H1 (cell line): ENCODE measurements at regions of chr3 and their contacts with region 1.

Region 1: DNA sequence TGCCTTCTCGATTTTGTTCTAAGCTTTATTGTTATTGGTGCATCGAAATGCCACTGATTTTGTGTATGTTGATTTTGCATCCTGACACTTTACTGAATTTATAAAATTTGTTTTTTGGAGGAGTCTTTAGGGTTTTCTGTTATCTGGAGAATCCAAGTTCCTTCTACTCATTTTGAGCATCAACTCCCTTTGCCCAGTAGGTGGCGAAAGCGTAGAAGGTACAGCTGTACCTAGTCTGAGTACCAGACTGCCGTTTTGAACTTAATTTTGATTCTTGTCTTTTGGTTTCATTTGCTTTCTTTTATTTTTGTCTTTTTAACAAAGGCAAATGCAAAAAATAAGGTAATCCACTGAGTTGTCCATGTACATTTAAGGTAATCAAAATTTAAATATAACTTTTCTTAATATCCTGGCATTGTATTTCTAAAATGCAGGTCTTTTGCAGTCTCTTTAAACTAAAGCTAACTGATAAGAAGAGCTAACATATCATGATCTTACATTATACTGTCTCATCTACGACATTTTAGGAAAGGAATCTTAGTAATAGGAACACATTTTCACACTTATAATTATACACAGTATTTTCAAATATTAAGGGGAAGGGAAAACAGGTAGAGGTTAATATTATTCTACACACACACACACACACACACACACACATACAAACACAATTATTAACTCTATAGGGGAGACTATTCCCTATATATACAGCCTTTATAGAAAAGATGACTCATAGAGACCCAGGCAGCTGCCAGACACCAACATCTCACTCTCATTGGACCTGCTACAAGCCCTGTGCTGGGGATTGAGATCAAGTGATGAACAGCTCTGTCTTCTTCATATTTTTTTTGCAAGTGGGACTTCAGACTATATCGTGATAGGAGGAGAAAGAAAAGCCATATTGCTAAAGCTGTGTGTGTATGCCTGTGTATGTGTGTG is 71.7 kb downstream of the SYNPR start:
- DNase-seq: no peak
- H3K4me3 ChIP-seq: no peak overlapping the region
- H3K27ac ChIP-seq: no peak overlapping the region
- H3K4me1 ChIP-seq: peaks cover 0 to 4% (median 3%) of the 10 kb centered on the region in 4 experiments; a peak in 3 of 7 replicates
- H3K27me3 ChIP-seq: no peaks in the 10 kb centered on the region
- CTCF ChIP-seq: peak in 2 of 3 experiments; percentile 70 to 71; a peak in 3 of 4 replicates
- EP300 ChIP-seq: no peak
- POLR2A ChIP-seq: no peak
- RAD21 ChIP-seq: peak; percentile 83 to 86

Region 2: GRCh38 chr3:63364910-63365431 is 15.1 kb after region 1 on chr3:
- CTCF ChIA-PET with region 1: interaction called, 96 read pairs
- POLR2A ChIA-PET with region 1: no interaction called
- DNase-seq: no peak
- H3K4me3 ChIP-seq: no peak overlapping the region
- H3K27ac ChIP-seq: no peak overlapping the region
- H3K4me1 ChIP-seq: no peaks in the 10 kb centered on the region
- H3K27me3 ChIP-seq: no peaks in the 10 kb centered on the region
- CTCF ChIP-seq: peak; percentile 31 to 84 (median 70)
- EP300 ChIP-seq: no peak
- POLR2A ChIP-seq: no peak
- RAD21 ChIP-seq: peak; percentile 72 to 81

Region 3: DNA sequence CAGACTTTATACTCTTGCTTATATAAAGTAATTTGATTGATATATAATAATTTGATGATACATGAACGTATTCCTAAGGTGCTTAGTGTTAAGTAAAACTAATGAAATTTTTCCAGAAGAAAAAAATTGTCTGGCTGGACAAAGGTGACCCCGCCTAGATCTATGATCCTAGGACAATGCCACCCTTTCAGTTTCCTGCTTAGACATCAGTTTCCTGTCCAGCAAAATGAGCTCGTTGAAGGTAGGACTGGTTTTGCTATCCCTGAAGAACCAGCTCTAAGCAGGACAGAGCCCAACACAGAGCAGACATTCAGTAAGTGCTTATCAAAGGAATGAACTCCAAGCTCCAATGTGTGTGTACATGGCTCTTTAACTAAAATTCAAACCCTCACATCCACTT is 221.8 kb after region 1 on chr3:
- CTCF ChIA-PET with region 1: interaction called, 34 read pairs
- POLR2A ChIA-PET with region 1: no interaction called
- DNase-seq: no peak
- H3K4me3 ChIP-seq: no peak overlapping the region
- H3K27ac ChIP-seq: no peak overlapping the region
- H3K4me1 ChIP-seq: peaks cover 0 to 8% (median 3%) of the 10 kb centered on the region in 4 experiments; a peak in 3 of 7 replicates
- H3K27me3 ChIP-seq: no peaks in the 10 kb centered on the region; a peak in 1 of 7 replicates
- CTCF ChIP-seq: no peak
- EP300 ChIP-seq: no peak
- POLR2A ChIP-seq: no peak
- RAD21 ChIP-seq: no peak

Region 4: DNA sequence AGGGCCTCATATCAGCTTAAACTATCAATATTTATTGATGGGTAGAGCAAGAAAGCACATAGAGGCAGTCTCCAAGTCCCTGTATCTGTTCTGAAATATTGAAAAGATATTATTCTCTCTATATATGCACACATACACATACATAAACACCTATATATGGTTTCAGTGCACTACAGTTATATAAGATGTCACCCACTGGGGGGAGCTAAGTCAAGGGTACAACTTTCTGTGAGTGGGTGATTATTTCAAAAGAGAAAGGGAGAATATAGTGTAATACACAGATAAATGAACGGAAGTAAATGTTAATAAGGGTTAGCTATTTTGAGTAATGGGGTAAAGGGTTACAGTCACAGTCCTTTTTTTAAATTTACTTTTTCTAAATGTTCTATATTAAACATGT is 311.4 kb after region 1 on chr3:
- CTCF ChIA-PET with region 1: interaction called, 77 read pairs
- POLR2A ChIA-PET with region 1: interaction called, 6 read pairs
- DNase-seq: no peak
- H3K4me3 ChIP-seq: no peak overlapping the region
- H3K27ac ChIP-seq: no peak overlapping the region
- H3K4me1 ChIP-seq: peaks cover 0 to 3% (median 0%) of the 10 kb centered on the region in 4 experiments; a peak in 1 of 7 replicates
- H3K27me3 ChIP-seq: no peaks in the 10 kb centered on the region
- CTCF ChIP-seq: peak in 2 of 3 experiments; percentile 5 to 23; a peak in 2 of 4 replicates
- EP300 ChIP-seq: no peak
- POLR2A ChIP-seq: no peak
- RAD21 ChIP-seq: peak in 1 of 2 experiments; percentile 17; a peak in 2 of 4 replicates

Region 5: GRCh38 chr3:63791974-63792545 is 442.2 kb after region 1 on chr3:
- CTCF ChIA-PET with region 1: interaction called, 17 read pairs
- POLR2A ChIA-PET with region 1: no interaction called
- DNase-seq: no peak
- H3K4me3 ChIP-seq: no peak overlapping the region
- H3K27ac ChIP-seq: no peak overlapping the region
- H3K4me1 ChIP-seq: peaks cover 0 to 7% (median 0%) of the 10 kb centered on the region in 4 experiments; a peak in 2 of 7 replicates
- H3K27me3 ChIP-seq: no peaks in the 10 kb centered on the region
- CTCF ChIP-seq: peak in 2 of 3 experiments; percentile 35 to 36; a peak in 2 of 4 replicates
- EP300 ChIP-seq: no peak
- POLR2A ChIP-seq: no peak
- RAD21 ChIP-seq: peak; percentile 65 to 72; a peak in 3 of 4 replicates

Region 6: GRCh38 chr3:63824309-63824708 is 474.5 kb after region 1 on chr3:
- CTCF ChIA-PET with region 1: interaction called, 79 read pairs
- POLR2A ChIA-PET with region 1: no interaction called
- DNase-seq: no peak
- H3K4me3 ChIP-seq: no peak overlapping the region
- H3K27ac ChIP-seq: no peak overlapping the region
- H3K4me1 ChIP-seq: no peaks in the 10 kb centered on the region
- H3K27me3 ChIP-seq: no peaks in the 10 kb centered on the region
- CTCF ChIP-seq: no peak
- EP300 ChIP-seq: no peak
- POLR2A ChIP-seq: no peak
- RAD21 ChIP-seq: no peak